Right cardiac atrium (tissue), 5 donors: ENCODE measurements at regions of chr4 and their contacts with region 1.

Region 1: DNA sequence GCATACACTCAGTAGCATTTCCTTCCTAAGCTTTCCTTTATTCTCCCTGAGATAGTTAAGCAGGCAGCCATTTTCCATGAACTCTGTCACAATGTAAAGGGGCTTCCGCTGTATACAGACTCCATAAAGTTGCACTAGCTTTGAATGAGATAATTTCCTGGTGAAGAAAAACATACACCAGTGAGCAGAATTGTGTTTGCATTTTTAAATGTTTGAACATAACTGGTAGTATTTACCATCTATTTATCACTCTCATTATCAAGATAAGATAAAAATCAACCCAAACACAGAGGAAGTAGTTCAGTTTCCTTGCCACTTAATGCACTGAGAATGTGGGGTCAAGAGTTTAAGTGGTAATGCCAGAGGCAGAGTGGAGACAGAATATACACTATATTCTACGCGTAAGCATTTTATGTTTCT is 54.1 kb downstream of the TXK start:
- DNase-seq: no peak
- ATAC-seq: no peak
- H3K4me3 ChIP-seq: no peak overlapping the region
- H3K27ac ChIP-seq: no peak overlapping the region
- H3K4me1 ChIP-seq: no peaks in the 10 kb centered on the region
- H3K27me3 ChIP-seq: no peaks in the 10 kb centered on the region

Region 2: DNA sequence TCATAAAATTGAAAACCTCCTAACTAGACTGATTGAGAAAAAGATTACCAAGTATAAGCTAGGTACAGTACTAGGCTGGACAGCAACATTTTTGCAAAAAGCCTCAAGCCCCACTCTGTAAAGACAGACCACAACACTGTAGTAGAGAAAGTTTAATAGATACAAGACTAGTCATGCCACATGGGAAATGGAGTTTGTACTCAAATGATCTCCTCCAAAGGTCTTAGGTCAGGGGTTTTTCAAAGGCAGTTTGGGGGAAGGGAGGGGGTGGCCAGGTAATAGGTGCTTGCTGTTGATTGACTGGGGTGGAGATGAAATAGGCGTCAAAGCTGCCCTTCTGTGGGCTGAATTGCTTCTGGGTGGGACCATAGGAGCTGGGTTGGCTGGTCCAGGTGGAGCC is 77.7 kb before region 1 on chr4:
- intact Hi-C with region 1: loop called in 2 of 4 experiments (anchors 5 kb)
- DNase-seq: no peak
- ATAC-seq: no peak
- H3K4me3 ChIP-seq: no peak overlapping the region
- H3K27ac ChIP-seq: no peak overlapping the region
- H3K4me1 ChIP-seq: no peaks in the 10 kb centered on the region
- H3K27me3 ChIP-seq: no peaks in the 10 kb centered on the region

Region 3: GRCh38 chr4:48022192-48022799 is 57.7 kb before region 1 on chr4:
- intact Hi-C with region 1: no loop called
- DNase-seq: no peak
- ATAC-seq: no peak
- H3K4me3 ChIP-seq: no peak overlapping the region
- H3K27ac ChIP-seq: no peak overlapping the region
- H3K4me1 ChIP-seq: no peaks in the 10 kb centered on the region
- H3K27me3 ChIP-seq: no peaks in the 10 kb centered on the region